ENCODE measurements at regions of chr19 and their contacts with region 1.

Region 1: DNA sequence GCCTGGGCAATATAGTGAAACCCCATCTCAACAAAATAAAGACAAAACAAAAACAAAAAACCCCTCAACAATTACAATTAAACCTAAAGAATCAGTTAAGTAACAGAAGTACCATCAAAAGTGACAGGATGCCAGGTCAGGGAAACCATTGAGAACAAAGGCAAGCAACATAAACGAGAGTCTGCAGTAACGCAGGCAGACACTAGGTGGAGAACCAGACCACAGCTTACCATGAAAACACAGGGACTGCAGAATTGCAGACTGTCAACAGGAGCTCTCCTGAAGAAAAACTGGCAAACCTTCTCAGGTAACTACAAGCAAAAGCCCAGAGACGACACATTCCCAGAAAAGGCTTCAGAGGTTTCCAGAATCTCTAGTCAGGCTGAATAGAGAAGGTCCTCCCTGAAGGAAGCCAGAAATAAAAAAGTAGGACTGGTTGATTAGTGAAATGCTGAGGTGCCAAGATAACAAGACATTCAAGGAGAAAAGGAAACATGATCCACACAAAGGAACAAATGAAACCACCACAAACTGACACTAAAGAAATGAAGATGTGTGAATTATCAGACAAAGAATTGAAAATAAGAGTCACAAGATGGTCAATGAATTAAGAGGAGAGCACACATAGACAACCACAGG is 2.2 kb upstream of the ZNF665 start:
- DNase-seq: peak; percentile 88
- ATAC-seq: peak; percentile 62
- H3K4me3 ChIP-seq: no peak overlapping the region
- H3K27ac ChIP-seq: no peak overlapping the region
- H3K4me1 ChIP-seq: peaks cover 6% of the 10 kb centered on the region; the same call in 1 of the 2 replicates
- H3K27me3 ChIP-seq: no peaks in the 10 kb centered on the region
- CTCF ChIP-seq: peak; percentile 97

Region 2: GRCh38 chr19:52978576-52978975 is 216.8 kb before region 1 on chr19:
- CTCF ChIA-PET with region 1: no interaction called
- POLR2A ChIA-PET with region 1: no interaction called
- intact Hi-C with region 1: no loop called
- DNase-seq: no peak
- ATAC-seq: no peak
- H3K4me3 ChIP-seq: no peak overlapping the region
- H3K27ac ChIP-seq: no peak overlapping the region
- H3K4me1 ChIP-seq: no peaks in the 10 kb centered on the region
- H3K27me3 ChIP-seq: no peaks in the 10 kb centered on the region
- CTCF ChIP-seq: no peak

Region 3: DNA sequence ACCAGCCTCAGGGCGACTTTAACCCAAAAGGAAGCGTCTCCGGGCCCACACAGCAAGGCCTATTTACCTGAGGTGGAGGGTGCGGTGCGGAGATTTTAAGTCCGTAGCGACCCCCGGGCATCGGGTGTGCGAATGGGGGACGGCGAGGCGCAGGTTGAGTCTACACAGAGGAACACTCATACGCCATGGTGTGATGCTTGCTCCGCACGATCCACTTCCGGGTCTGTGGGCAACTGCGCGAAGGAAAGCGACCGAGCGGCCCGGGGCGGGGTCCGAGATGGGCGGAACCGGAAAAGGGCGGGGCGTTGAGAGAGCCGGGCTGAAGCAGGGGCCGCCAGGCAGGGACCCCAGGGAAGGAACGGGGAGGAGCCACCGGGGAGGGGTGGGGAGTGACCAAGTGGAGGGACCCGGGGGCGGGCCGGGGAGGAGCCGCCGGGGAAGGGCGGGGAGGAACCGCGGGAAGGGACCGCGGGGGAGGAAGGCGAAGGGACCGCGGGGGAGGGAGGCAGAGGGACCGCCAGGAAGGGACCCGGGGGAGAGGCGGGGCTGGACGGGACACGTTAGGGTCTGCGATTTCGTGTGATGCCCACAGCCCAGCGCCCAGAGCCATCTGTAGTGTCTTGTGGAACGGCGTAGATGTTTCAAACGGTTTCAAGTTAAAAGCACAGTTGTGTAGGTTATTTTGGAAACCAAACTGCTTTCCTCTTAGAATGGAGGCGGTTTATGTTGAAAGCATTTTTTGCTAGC is 92.0 kb before region 1 on chr19 and contains the start of gene ZNF160:
- CTCF ChIA-PET with region 1: no interaction called
- POLR2A ChIA-PET with region 1: no interaction called
- intact Hi-C with region 1: loop called (anchors 5 kb)
- DNase-seq: peak; percentile 99
- ATAC-seq: peak; percentile 93
- H3K4me3 ChIP-seq: peak within 1 kb of the TSS; percentile 97
- H3K27ac ChIP-seq: peak within 1 kb of the TSS; percentile 56
- H3K4me1 ChIP-seq: peaks cover 9% of the 10 kb centered on the region
- H3K27me3 ChIP-seq: no peaks in the 10 kb centered on the region
- CTCF ChIP-seq: no peak
- total RNA-seq, gene ZNF160: 22.3 and 25.1 TPM in 2 replicates

Region 4: DNA sequence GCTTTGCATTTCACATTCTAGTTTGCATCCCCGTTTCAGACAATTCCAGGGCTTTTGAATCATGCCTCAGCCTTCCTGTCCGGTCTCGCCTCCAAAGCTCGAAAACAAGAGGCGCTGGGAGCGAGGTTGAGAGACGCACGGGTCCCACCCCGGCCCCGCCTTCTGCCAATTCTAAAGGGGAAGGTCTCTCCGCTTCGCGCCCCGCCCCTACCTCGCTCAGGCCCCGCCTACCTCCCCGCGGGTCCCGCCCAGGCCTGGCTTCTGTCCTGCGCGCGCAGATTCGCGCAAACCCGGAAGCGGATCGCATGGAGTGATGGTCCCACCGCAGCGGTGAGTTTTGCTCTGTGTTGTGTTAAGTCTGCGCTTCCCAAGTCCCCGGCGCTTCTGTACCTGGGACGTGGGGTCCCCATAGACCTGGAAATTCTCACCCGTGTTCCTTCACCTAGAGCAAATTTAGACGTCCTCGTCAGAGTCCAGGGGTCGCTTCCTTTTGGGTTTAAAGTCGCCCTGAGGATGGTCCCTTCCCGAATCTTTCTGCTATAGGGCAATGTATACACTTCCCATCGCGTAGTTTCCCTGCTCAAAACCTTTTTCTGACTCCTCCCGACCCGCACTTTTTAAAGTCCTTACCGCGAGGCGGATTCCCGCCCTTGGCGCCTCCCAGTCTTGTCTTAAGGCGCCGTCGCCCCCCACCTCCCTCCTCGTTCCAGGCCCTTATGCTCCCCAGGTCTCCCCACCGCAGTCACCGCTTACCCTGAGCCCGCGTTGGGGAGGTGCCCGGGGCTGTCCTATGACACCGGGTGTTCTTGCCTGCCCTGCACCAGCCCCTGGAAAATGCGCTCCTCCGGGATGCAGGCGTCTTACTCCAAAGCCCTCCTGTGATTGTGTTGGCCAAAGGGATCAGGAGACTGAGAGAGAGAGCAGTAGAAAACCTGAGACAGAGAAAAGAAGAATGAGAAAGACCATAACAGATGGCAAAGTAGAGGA is 138.4 kb after region 1 on chr19 and contains the start of gene ZNF845:
- CTCF ChIA-PET with region 1: interaction called, 3 read pairs
- POLR2A ChIA-PET with region 1: interaction called, 4 read pairs
- intact Hi-C with region 1: loop called (anchors 10 kb)
- DNase-seq: peak; percentile 96
- ATAC-seq: peak; percentile 99
- H3K4me3 ChIP-seq: peak within 1 kb of the TSS; percentile 79
- H3K27ac ChIP-seq: peak within 1 kb of the TSS; percentile 12
- H3K4me1 ChIP-seq: no peaks in the 10 kb centered on the region
- H3K27me3 ChIP-seq: no peaks in the 10 kb centered on the region
- CTCF ChIP-seq: no peak
- total RNA-seq, gene ZNF845: 4.4 and 6.6 TPM in 2 replicates

Region 5: DNA sequence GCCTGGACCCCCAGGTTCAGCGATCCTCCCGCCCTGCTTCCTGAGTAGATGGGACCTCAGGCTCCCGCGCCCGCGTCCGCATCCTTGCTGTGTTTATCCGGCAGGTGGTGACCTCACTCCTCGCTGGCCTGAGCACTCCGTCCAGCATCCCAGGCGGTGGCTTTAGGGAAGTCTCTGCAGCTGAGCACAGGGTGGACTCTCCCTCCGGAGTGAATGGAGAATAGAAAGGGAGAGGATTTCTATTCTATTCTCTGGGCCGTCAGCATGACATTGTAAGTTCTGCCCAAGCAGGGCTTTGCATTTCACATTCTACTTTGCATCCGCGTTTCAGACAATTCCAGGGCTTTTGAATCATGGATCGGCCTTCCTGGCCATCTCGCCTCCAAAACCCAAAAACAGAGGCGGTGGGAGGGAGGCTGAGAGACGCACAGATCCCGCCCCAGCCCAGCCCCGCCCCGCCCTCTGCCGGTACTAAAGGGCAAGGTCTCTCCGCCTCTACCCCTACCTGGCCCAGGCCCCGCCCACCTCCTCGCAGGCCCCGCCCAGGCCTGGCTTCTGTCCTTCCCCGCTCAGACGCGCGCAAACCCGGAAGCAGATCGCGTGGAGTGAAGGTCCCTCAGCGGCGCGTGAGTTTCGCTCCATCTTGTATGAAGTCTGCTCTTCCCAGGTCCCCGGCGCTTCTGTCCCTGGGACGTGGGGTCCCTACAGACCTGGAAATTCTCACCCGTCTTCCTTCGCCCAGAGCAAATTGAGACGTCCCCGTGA is 169.9 kb after region 1 on chr19 and contains the start of gene ZNF525:
- CTCF ChIA-PET with region 1: no interaction called
- POLR2A ChIA-PET with region 1: no interaction called
- intact Hi-C with region 1: loop called (anchors 1 kb)
- DNase-seq: peak; percentile 95
- ATAC-seq: peak; percentile 96
- H3K4me3 ChIP-seq: peak within 1 kb of the TSS; percentile 78
- H3K27ac ChIP-seq: peak within 1 kb of the TSS; percentile 58
- H3K4me1 ChIP-seq: no peaks in the 10 kb centered on the region
- H3K27me3 ChIP-seq: no peaks in the 10 kb centered on the region
- CTCF ChIP-seq: peak; percentile 50; the same call in 1 of the 2 replicates
- total RNA-seq, gene ZNF525: 13.1 and 25.6 TPM in 2 replicates

Region 6: DNA sequence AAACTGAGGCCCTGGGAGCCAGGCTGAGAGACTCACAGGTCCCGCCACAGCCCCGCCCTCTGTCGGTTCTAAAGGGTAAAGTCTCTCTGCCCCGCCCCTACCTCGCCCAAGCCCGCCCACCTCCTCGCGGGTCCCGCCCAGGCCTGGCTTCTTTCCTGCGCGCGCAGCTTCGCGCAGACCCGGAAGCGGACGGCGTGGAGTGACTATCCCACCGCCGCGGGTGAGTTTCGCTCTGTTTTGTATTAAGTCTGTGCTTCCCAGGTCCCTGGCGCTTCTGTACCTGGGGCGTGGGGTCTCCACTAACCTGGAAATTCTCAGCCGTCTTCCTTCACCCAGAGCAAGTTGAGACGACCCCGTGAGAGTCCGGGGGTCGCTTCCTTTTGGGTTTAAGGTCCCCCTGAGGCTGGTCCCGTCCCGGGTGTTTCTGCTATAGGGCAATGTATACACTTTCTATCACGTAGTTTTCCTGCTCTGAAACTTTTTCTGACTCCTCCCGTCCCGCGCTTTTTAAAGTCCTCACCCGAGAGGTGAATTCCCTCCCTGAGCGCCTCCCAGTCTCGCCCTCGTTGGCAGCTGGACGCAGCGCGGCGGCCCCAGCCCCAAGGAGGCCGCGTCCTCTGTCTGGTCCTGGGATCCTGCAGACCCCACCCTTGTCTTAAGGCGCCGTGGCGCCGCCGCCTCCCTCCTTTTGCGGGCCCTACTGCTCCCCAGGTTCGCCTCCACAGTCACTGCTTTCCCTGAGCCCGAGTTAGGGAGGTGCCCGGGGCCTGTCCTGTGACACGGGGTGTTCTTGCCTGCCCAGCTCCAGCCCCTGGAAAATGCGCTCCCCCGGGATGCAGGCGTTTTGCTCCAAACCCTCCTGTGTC is 199.8 kb after region 1 on chr19 and contains the start of gene ZNF765:
- CTCF ChIA-PET with region 1: no interaction called
- POLR2A ChIA-PET with region 1: no interaction called
- intact Hi-C with region 1: loop called (anchors 10 kb)
- DNase-seq: peak; percentile 94
- ATAC-seq: peak; percentile 88
- H3K4me3 ChIP-seq: peak within 1 kb of the TSS; percentile 87
- H3K27ac ChIP-seq: peak within 1 kb of the TSS; percentile 51
- H3K4me1 ChIP-seq: peaks cover 7% of the 10 kb centered on the region; the same call in 1 of the 2 replicates
- H3K27me3 ChIP-seq: no peaks in the 10 kb centered on the region
- CTCF ChIP-seq: peak; percentile 41
- total RNA-seq, gene ZNF765: 9.6 and 11.4 TPM in 2 replicates

Measured in PC-3 (cell line).